SK-N-SH (cell line): ENCODE measurements at regions of chr12 and their contacts with region 1.

Region 1: GRCh38 chr12:122356192-122356635 is 66.3 kb downstream of the CLIP1 start:
- DNase-seq: peak; percentile 77
- H3K4me3 ChIP-seq: no peak overlapping the region; a peak in 1 of 4 replicates
- H3K27ac ChIP-seq: no peak overlapping the region
- H3K4me1 ChIP-seq: peaks cover 0 to 7% of the 10 kb centered on the region in 2 experiments; a peak in 2 of 4 replicates
- H3K27me3 ChIP-seq: no peaks in the 10 kb centered on the region
- CTCF ChIP-seq: peak; percentile 88
- EP300 ChIP-seq: no peak
- RAD21 ChIP-seq: peak; percentile 86

Region 2: DNA sequence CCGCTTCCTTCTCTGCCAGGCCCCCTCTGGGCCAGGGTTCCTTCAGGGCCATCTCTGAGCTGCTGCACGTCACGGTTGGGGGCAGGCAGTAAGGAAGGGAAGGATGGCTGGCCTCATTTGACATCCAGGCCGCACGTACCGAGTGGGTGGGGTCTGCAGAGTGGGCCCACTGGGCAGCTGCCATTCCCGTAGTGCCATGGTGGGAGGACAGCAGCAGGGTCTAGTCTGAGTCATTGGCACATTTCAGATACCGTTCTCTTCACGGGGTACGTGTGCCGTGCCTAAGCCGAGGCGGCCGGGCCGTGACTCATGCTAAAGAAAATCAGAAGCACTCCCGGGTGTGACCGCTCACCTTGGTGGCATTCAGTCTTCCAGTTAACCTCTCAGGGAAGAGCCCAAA is 226.1 kb before region 1 on chr12:
- CTCF ChIA-PET with region 1: interaction called, 32 read pairs
- POLR2A ChIA-PET with region 1: no interaction called
- DNase-seq: no peak
- H3K4me3 ChIP-seq: no peak overlapping the region
- H3K27ac ChIP-seq: peak overlapping the region in 1 of 2 experiments; percentile 22; a peak in 1 of 4 replicates
- H3K4me1 ChIP-seq: no peaks in the 10 kb centered on the region; a peak in 1 of 4 replicates
- H3K27me3 ChIP-seq: no peaks in the 10 kb centered on the region
- CTCF ChIP-seq: no peak
- EP300 ChIP-seq: no peak
- RAD21 ChIP-seq: no peak

Region 3: GRCh38 chr12:122190842-122191668 is 165.2 kb before region 1 on chr12:
- CTCF ChIA-PET with region 1: interaction called, 15 read pairs
- POLR2A ChIA-PET with region 1: no interaction called
- DNase-seq: peak; percentile 87
- H3K4me3 ChIP-seq: no peak overlapping the region; a peak in 1 of 4 replicates
- H3K27ac ChIP-seq: no peak overlapping the region
- H3K4me1 ChIP-seq: no peaks in the 10 kb centered on the region
- H3K27me3 ChIP-seq: no peaks in the 10 kb centered on the region
- CTCF ChIP-seq: peak; percentile 86
- EP300 ChIP-seq: no peak
- RAD21 ChIP-seq: peak; percentile 90

Region 4: GRCh38 chr12:122225683-122226407 is 130.4 kb before region 1 on chr12 and contains the start of gene DIABLO:
- CTCF ChIA-PET with region 1: interaction called, 22 read pairs
- POLR2A ChIA-PET with region 1: interaction called, 3 read pairs
- DNase-seq: peak; percentile 96
- H3K4me3 ChIP-seq: peak within 1 kb of the TSS; percentile 76 to 95
- H3K27ac ChIP-seq: peak within 1 kb of the TSS; percentile 98 to 100
- H3K4me1 ChIP-seq: peaks cover 17 to 37% of the 10 kb centered on the region in 2 experiments
- H3K27me3 ChIP-seq: no peaks in the 10 kb centered on the region
- CTCF ChIP-seq: no peak
- EP300 ChIP-seq: no peak
- RAD21 ChIP-seq: 0 out of 2 replicates have a peak, but pooled peaks have one; percentile 10
- polyA plus RNA-seq, gene DIABLO: 65.6 and 78.9 TPM in 2 replicates

Region 5: GRCh38 chr12:122336015-122336946 is 19.9 kb before region 1 on chr12:
- CTCF ChIA-PET with region 1: interaction called, 50 read pairs
- POLR2A ChIA-PET with region 1: no interaction called
- DNase-seq: peak; percentile 24
- H3K4me3 ChIP-seq: no peak overlapping the region
- H3K27ac ChIP-seq: no peak overlapping the region
- H3K4me1 ChIP-seq: no peaks in the 10 kb centered on the region
- H3K27me3 ChIP-seq: no peaks in the 10 kb centered on the region
- CTCF ChIP-seq: peak; percentile 73
- EP300 ChIP-seq: no peak
- RAD21 ChIP-seq: peak; percentile 49

Region 6: DNA sequence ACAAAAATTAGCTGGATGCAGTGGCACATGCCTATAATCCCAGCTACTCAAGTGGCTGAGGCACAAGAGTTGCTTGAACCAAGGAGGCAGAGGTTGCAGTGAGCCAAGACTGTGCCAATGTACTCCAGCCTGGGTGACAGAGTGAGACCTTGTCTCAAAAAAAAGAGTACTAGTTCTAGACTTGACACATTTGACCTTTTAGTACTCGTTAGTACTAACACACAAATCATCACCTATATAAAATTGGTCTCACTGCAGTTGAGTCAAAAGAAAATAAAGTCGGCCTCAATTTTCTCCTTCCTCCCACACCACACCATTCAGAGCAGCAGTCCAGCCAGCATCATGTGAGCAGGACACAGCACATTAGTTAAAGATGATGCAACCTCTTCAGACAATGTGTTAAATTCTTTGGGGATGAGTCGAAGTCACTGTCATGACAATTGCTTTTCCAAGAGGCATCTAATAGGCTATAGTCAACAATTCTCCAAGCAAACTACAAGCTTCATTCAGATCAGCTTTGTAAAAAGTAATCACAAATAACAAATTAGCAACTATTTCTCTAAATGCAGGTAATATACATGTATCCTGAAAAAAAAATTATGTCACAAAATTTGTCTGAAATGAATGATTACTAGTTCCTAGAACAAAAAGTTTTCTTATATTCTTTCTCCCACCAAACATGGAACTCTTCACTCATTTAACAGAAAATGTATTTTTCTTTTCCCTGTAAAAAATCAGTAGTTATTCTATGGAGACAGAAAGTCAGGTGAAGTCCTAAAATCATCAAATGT is 10.7 kb after region 1 on chr12:
- CTCF ChIA-PET with region 1: interaction called, 13 read pairs
- POLR2A ChIA-PET with region 1: no interaction called
- DNase-seq: no peak
- H3K4me3 ChIP-seq: no peak overlapping the region
- H3K27ac ChIP-seq: peak overlapping the region; percentile 18 to 82; a peak in 3 of 4 replicates
- H3K4me1 ChIP-seq: peaks cover 0 to 29% of the 10 kb centered on the region in 2 experiments; a peak in 1 of 4 replicates
- H3K27me3 ChIP-seq: no peaks in the 10 kb centered on the region
- CTCF ChIP-seq: no peak
- EP300 ChIP-seq: peak in 1 of 2 experiments; percentile 16; a peak in 1 of 4 replicates
- RAD21 ChIP-seq: no peak

Region 7: DNA sequence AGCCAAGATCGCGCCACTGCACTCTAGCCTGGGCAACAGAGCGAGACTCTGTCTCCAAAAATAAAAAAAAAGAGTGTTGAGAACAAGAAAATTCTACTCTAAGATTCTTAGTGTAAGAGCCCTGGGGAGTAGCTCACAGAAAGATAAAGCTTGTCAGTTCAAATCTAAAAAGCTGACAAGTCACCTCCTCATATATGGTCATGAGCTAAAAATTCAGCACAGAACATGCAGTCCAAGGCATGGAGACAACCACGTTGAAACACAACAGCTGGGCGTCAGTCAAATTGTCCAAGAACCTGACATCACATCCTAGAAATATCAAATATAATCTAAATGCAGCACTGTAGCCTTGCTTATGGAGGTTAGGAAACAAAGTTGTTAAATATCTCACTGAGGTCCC is 18.5 kb after region 1 on chr12:
- CTCF ChIA-PET with region 1: interaction called, 12 read pairs
- POLR2A ChIA-PET with region 1: no interaction called
- DNase-seq: no peak
- H3K4me3 ChIP-seq: no peak overlapping the region
- H3K27ac ChIP-seq: no peak overlapping the region
- H3K4me1 ChIP-seq: no peaks in the 10 kb centered on the region
- H3K27me3 ChIP-seq: no peaks in the 10 kb centered on the region
- CTCF ChIP-seq: no peak
- EP300 ChIP-seq: no peak
- RAD21 ChIP-seq: no peak